B cell (primary cell): ENCODE measurements at regions of chr22 and their contacts with region 1.

Region 1: GRCh38 chr22:21014202-21014725 is 701 bp upstream of the P2RX6 start:
- DNase-seq: peak; percentile 95
- ATAC-seq: peak; percentile 95
- H3K4me3 ChIP-seq: peak overlapping the region in 4 of 5 experiments; percentile 45 to 57 (median 52)
- H3K4me3 Mint-ChIP-seq: peak overlapping the region; percentile 94
- H3K27ac ChIP-seq: peak overlapping the region; percentile 73 to 74
- H3K27ac Mint-ChIP-seq: peak overlapping the region; percentile 91
- H3K4me1 ChIP-seq: peaks cover 14 to 24% of the 10 kb centered on the region in 2 donors
- H3K4me1 Mint-ChIP-seq: peaks cover 24% of the 10 kb centered on the region
- H3K27me3 ChIP-seq: no peaks in the 10 kb centered on the region
- H3K27me3 Mint-ChIP-seq: no peaks in the 10 kb centered on the region
- CTCF ChIP-seq: no peak

Region 2: GRCh38 chr22:20981787-20982562 is 32.3 kb before region 1 on chr22 and contains the start of gene LZTR1:
- CTCF ChIA-PET with region 1: interaction called, 3 read pairs
- POLR2A ChIA-PET with region 1: no interaction called
- intact Hi-C with region 1: loop called (anchors 1 kb)
- DNase-seq: peak; percentile 87
- ATAC-seq: peak; percentile 85
- H3K4me3 ChIP-seq: peak within 1 kb of the TSS; percentile 53 to 85 (median 77)
- H3K4me3 Mint-ChIP-seq: peak within 1 kb of the TSS; percentile 95
- H3K27ac ChIP-seq: peak within 1 kb of the TSS; percentile 75 to 79
- H3K27ac Mint-ChIP-seq: peak within 1 kb of the TSS; percentile 89
- H3K4me1 ChIP-seq: peaks cover 24 to 34% of the 10 kb centered on the region in 2 donors
- H3K4me1 Mint-ChIP-seq: peaks cover 36% of the 10 kb centered on the region
- H3K27me3 ChIP-seq: peaks cover 0 to 3% (median 0%) of the 10 kb centered on the region in 4 experiments
- H3K27me3 Mint-ChIP-seq: peaks cover 3% of the 10 kb centered on the region
- CTCF ChIP-seq: peak; percentile 51
- total RNA-seq, gene LZTR1: 94.8 and 104 TPM in 2 replicates